ENCODE measurements at regions of chr9 and their contacts with region 1.

Region 1: GRCh38 chr9:17863213-17863883 is 284.5 kb downstream of the SH3GL2 start:
- DNase-seq: no peak
- H3K4me3 Mint-ChIP-seq: no peak overlapping the region
- H3K27ac Mint-ChIP-seq: no peak overlapping the region
- H3K4me1 Mint-ChIP-seq: no peaks in the 10 kb centered on the region
- H3K27me3 Mint-ChIP-seq: no peaks in the 10 kb centered on the region
- CTCF ChIP-seq: no peak

Region 2: DNA sequence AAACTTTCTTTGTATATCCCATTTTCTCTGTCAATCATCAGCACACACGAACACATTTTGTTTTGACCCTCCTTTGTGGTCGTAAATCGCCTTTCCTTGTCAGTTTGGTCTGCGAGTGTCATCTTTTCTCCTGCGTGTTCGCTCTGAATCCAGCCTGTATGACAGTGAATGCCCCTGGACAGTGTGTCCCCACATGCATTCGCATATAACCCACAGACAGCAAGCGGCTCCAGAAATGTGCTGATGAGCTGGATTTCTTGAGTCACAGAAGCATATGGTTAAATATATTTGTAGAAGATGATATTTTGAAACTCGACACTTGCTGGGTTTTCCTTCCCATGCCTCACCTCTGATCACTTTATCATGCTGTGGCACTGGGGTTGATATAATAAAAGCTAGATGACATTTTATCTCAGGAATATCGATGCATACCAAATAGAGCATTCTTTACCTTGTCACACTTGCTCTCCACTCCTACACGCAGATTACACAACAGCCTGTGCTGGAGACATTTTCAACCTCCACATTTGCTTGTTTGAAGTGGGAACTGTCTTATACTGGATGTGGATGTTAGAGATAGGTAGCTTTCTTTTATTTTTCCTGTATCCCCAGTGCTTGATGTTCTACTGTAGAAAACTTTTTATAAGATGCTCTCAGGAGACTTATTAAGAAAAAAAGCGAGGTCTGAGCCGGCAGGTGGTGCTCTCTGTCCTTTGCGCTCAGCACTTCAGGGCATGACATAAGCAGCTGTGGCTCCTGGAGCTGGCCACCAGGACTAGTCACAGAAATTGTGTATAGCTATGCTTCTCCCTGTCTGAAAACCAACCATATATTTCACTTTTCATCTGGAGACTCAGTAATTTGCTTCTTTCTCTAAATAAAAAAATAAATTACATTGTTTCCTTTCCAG is 69.4 kb before region 1 on chr9:
- CTCF ChIA-PET with region 1: no interaction called
- POLR2A ChIA-PET with region 1: no interaction called
- intact Hi-C with region 1: loop called (anchors 2 kb)
- DNase-seq: peak; percentile 49
- H3K4me3 Mint-ChIP-seq: no peak overlapping the region
- H3K27ac Mint-ChIP-seq: no peak overlapping the region
- H3K4me1 Mint-ChIP-seq: no peaks in the 10 kb centered on the region
- H3K27me3 Mint-ChIP-seq: peaks cover 64% of the 10 kb centered on the region
- CTCF ChIP-seq: no peak

Region 3: GRCh38 chr9:17878810-17879370 is 15.5 kb after region 1 on chr9:
- CTCF ChIA-PET with region 1: no interaction called
- POLR2A ChIA-PET with region 1: no interaction called
- intact Hi-C with region 1: no loop called
- DNase-seq: no peak
- H3K4me3 Mint-ChIP-seq: no peak overlapping the region
- H3K27ac Mint-ChIP-seq: no peak overlapping the region
- H3K4me1 Mint-ChIP-seq: no peaks in the 10 kb centered on the region
- H3K27me3 Mint-ChIP-seq: peaks cover under 1% of the 10 kb centered on the region
- CTCF ChIP-seq: no peak

Measured in MCF 10A (cell line).